Dendritic cell treated with granulocyte-macrophage colony-stimulating factor and Interleukin-4, amounts not matched to agents 40 ng/mL and 50 ng/mL, for 4 days (primary cell): ENCODE measurements at regions of chr6 and their contacts with region 1.

Region 1: GRCh38 chr6:32933636-32934085 is 7.2 kb downstream of the HLA-DMB start:
- H3K4me3 Mint-ChIP-seq: no peak overlapping the region
- H3K27ac Mint-ChIP-seq: peak overlapping the region; percentile 98
- H3K4me1 Mint-ChIP-seq: peaks cover 87% of the 10 kb centered on the region
- H3K27me3 Mint-ChIP-seq: no peaks in the 10 kb centered on the region

Region 2: GRCh38 chr6:32952817-32953739 is 19.4 kb after region 1 on chr6 and contains the start of gene HLA-DMA:
- intact Hi-C with region 1: loop called (anchors 2 kb)
- H3K4me3 Mint-ChIP-seq: peak within 1 kb of the TSS; percentile 94
- H3K27ac Mint-ChIP-seq: peak within 1 kb of the TSS; percentile 98
- H3K4me1 Mint-ChIP-seq: peaks cover 70% of the 10 kb centered on the region
- H3K27me3 Mint-ChIP-seq: no peaks in the 10 kb centered on the region

Region 3: DNA sequence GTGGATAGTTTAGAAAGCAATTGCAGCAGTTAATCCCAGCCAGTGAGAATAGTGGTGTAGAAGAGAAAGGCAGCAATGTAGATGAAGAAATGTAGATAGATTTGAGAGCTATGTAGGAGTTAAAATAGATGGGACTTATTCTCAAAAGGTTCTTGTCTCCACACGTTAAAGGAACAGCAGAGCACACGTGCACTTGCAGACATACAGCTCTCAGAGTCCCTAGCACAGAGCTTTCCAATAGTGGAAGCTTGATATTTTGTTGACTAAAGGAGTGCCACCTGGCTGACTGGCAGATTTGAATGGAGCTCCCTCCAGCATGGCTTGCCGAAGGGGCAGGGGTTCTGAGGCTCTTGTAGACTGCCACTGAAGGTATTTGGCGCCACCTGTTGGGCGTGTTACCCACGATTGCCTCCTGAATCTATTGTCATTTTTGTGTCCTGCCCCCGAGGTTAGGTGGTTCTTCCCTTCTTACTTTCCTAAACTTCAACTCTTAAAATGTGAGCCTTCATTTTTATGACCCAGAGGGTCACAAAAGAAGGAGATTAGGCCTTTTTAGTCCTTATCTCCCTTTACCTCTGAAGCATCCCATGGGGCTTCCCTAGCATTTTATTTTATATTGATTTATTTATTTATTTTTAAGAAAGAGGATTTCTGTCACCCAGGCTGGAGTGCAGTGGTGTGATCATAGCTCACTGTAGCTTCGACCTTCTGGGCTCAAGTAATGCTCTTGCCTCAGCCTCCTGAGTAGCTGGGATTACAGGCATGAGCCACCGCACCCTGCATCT is 51.1 kb after region 1 on chr6:
- intact Hi-C with region 1: loop called (anchors 1 kb)
- H3K4me3 Mint-ChIP-seq: no peak overlapping the region
- H3K27ac Mint-ChIP-seq: peak overlapping the region; percentile 43
- H3K4me1 Mint-ChIP-seq: peaks cover 43% of the 10 kb centered on the region
- H3K27me3 Mint-ChIP-seq: no peaks in the 10 kb centered on the region